ENCODE measurements at regions of chr4 and their contacts with region 1.

Region 1: DNA sequence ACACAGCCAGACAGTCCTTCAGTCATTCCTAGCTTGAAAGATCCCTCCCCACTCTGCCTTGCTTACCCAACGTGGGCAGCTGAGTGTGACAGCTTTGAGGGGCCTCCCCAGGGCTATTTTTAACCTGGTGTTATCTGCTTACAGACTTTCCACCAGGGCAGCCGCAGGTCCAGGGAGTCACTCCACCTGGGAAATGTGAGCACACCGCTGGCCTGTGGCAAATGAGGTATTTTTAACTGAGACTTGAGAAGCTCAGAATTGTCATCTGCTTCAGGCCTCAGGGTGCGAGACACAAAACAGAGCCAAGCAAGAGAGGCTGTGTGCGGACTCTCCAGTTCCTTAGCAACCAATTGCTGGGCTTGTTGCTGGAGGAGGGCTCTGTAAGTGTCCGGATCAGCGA is 13.0 kb downstream of the CORIN start:
- H3K4me3 ChIP-seq: no peak overlapping the region
- H3K27ac ChIP-seq: no peak overlapping the region
- H3K4me1 ChIP-seq: no peaks in the 10 kb centered on the region
- CTCF ChIP-seq: no peak

Region 2: GRCh38 chr4:47801481-47802002 is 23.3 kb before region 1 on chr4:
- CTCF ChIA-PET with region 1: no interaction called
- POLR2A ChIA-PET with region 1: no interaction called
- H3K4me3 ChIP-seq: no peak overlapping the region
- H3K27ac ChIP-seq: no peak overlapping the region
- H3K4me1 ChIP-seq: no peaks in the 10 kb centered on the region
- CTCF ChIP-seq: no peak

Region 3: GRCh38 chr4:48470570-48470969 is 645.7 kb after region 1 on chr4:
- CTCF ChIA-PET with region 1: no interaction called
- POLR2A ChIA-PET with region 1: interaction called, 12 read pairs
- H3K4me3 ChIP-seq: no peak overlapping the region
- H3K27ac ChIP-seq: no peak overlapping the region
- H3K4me1 ChIP-seq: no peaks in the 10 kb centered on the region
- CTCF ChIP-seq: no peak